ENCODE measurements at regions of chr13 and their contacts with region 1.

Region 1: DNA sequence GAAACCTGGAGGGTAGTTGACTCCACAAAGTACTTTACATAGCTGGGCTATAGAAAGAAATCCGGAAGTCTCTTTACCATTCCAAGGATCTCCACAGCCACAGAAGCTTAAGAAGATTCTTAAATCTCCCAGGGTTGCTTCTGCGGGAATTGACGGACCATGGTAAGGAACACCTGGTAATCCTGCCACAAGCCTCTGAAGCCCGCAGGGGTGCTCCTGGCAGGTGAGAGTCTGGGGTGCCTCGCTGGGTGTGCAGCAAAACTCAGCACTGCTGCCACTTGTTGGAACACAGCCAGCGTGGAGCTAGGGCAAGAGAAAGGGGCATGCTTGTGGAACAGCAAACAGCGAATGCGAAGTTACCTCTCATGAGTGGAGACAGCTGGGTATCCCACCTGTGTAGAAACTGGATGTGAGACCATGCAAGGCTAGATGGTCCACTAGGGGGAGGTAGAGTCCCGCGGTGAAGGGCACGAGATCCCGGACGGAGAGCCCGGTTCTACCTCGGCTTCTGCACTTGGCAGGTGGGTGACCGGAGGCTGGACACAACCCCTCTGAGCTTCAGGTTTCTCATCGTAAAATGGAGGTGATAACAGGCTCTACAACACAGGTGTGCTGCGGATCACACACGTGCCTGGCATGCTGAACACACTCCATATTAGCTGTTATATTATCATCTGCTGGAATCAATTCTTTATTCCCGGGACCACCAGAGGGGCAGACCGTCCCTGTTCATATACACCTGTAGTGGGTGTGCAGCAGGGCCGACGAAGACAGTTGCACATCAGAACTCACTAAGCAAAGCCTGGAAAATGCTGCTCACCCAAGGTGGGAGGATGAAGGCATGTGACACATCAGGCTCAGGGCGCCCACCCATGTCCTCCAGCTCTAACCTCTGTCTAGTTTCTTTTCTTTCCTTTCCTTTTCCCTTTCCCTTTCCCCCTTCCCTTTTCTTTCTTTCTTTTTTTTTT is 24.1 kb upstream of the UBAC2 start:
- DNase-seq: peak; percentile 52 to 71
- H3K4me3 ChIP-seq: no peak overlapping the region
- H3K27ac ChIP-seq: no peak overlapping the region
- H3K4me1 ChIP-seq: no peaks in the 10 kb centered on the region
- H3K27me3 ChIP-seq: peaks cover 0 to 33% of the 10 kb centered on the region in 2 donors
- CTCF ChIP-seq: peak; percentile 86 to 95

Region 2: DNA sequence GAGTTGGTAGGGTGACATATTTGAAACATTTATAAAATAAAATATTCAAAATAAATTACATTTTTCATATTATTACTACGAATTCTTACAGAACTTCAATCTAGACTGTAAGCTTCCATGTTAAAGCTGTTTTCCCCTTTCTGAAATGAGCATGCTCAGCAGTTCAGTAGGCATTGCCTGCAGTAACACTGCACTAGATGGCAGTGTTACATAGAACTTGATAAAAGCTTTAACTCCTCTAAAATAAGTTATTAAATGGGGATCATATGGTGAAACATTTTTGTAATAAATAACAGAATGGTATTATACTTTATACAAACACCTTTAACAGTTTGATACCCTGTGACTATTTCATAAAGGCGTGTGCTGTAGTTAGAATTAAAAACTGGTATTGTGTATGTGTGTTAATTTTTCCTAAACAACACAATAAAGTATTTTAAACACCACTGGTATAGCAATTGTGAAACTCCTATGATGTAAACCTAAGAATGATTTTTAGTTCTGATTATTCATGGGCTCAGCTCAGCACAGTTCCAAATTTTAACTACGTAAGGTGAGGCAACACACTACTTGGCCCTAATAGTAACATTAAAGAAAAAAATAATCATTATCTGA is 93.1 kb after region 1 on chr13:
- intact Hi-C with region 1: loop called (anchors 5 kb)
- DNase-seq: no peak
- H3K4me3 ChIP-seq: no peak overlapping the region
- H3K27ac ChIP-seq: no peak overlapping the region
- H3K4me1 ChIP-seq: no peaks in the 10 kb centered on the region
- H3K27me3 ChIP-seq: no peaks in the 10 kb centered on the region
- CTCF ChIP-seq: peak; percentile 63 to 64

Region 3: GRCh38 chr13:99436686-99437416 is 260.3 kb after region 1 on chr13:
- intact Hi-C with region 1: loop called (anchors 2 kb)
- DNase-seq: peak; percentile 78 to 86
- H3K4me3 ChIP-seq: no peak overlapping the region
- H3K27ac ChIP-seq: no peak overlapping the region
- H3K4me1 ChIP-seq: peaks cover 0 to 15% (median 5%) of the 10 kb centered on the region in 4 donors
- H3K27me3 ChIP-seq: peaks cover 0 to 25% of the 10 kb centered on the region in 2 donors
- CTCF ChIP-seq: peak; percentile 99 to 100